ENCODE measurements at regions of chr12 and their contacts with region 1.

Region 1: GRCh38 chr12:123351349-123351748 is 13.3 kb downstream of the SBNO1 start:
- DNase-seq: no peak
- CTCF ChIP-seq: no peak

Region 2: GRCh38 chr12:123337070-123337469 is 14.3 kb before region 1 on chr12:
- CTCF ChIA-PET with region 1: interaction called, 15 read pairs
- POLR2A ChIA-PET with region 1: no interaction called
- DNase-seq: no peak
- CTCF ChIP-seq: no peak

Region 3: GRCh38 chr12:123488539-123489230 is 137.3 kb after region 1 on chr12:
- CTCF ChIA-PET with region 1: no interaction called
- POLR2A ChIA-PET with region 1: no interaction called
- DNase-seq: no peak
- CTCF ChIP-seq: no peak